Right ventricle myocardium inferior (tissue), 1 donor: ENCODE measurements at regions of chr7 and their contacts with region 1.

Region 1: GRCh38 chr7:92691578-92691977 is 101.4 kb upstream of the FAM133B start:
- DNase-seq: no peak
- ATAC-seq: no peak

Region 2: GRCh38 chr7:92528188-92528957 is 163.2 kb before region 1 on chr7 and contains the starts of genes PEX1 and RBM48:
- intact Hi-C with region 1: loop called (anchors 10 kb)
- DNase-seq: peak; percentile 96
- ATAC-seq: peak; percentile 99
- total RNA-seq, gene PEX1: 10.4 TPM
- total RNA-seq, gene RBM48: 11.8 TPM

Region 3: DNA sequence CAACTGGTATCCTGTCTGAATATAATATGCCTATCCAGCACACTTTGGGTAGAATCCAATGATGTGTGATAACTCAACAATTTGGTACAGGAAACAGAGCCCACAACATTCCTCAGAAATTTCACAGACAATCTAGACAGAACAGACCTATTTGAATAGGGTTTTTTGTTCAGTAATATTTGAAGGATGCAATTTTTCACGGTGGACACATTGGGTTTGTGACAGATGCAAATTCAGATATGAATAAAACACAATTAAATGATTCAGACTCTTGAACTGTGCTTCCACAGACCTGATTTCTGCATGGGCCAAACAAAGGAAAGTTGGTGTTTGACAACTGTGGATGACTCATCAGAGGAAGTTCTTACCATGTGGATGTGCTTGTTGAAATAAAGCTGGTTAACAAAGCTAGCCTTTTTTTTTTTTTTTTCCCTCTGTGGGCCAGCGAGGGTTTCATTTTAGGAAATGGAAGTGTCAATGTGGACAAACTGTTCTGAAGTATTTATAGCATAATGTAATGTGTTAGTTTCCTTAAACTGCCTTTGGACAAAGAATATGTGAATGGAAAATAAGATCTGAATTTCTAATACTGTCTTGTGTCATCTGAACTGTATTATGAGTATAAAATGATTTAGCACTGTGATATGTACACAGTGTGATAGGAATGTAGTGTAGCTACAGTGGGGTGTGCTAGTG is 58.2 kb before region 1 on chr7:
- intact Hi-C with region 1: loop called (anchors 5 kb)
- DNase-seq: no peak
- ATAC-seq: peak; percentile 82

Region 4: GRCh38 chr7:92717993-92718716 is 26.6 kb after region 1 on chr7:
- intact Hi-C with region 1: loop called (anchors 2 kb)
- DNase-seq: peak; percentile 68
- ATAC-seq: peak; percentile 70